ENCODE measurements at regions of chr3 and their contacts with region 1.

Region 1: GRCh38 chr3:5006755-5007202 is 27.5 kb downstream of the BHLHE40 start:
- DNase-seq: peak; percentile 95
- ATAC-seq: peak; percentile 78
- H3K4me3 ChIP-seq: 0 out of 2 replicates have a peak overlapping the region, but pooled peaks have one; percentile 26
- H3K27ac ChIP-seq: peak overlapping the region; percentile 94
- H3K4me1 ChIP-seq: peaks cover 53% of the 10 kb centered on the region
- H3K27me3 ChIP-seq: no peaks in the 10 kb centered on the region
- CTCF ChIP-seq: peak in 1 of 3 experiments; percentile 24; a peak in 2 of 6 replicates
- EP300 ChIP-seq: peak; percentile 98 to 99
- POLR2A ChIP-seq: peak; percentile 69; the same call in 1 of the 2 replicates
- RAD21 ChIP-seq: peak; percentile 30; the same call in 1 of the 2 replicates

Region 2: DNA sequence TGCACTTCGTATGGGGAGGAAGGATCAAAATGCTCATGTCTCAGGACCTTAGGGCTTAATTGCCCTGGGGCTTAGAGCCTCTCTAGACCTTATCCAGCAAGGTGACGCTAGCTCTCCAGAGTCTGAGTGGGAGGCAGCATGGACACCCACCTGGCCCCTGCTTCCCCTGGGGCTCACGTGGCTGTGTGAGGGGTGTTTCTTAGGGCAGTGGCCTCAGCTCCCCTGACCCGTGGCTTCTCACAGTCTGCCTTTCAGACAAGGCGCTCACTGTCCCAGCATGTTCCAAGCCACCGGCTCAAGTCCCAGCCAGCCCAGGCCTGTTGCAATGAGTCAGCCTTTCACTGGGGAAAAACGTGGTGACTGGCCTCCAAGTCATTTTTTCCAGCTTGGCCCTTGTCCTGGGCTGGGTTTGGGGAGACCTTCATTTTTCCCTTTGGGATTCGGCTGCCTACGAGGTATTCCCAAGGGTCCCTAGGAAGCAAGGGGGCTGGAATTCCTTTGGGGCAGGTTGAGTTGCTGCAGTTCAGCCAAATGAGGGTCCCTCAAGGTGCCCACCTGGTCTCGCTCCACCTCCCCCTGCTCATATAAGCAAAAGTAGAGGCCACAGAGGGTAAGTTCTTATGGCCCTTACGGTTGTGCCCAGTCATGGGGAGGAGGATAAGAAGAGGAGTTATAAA is 11.8 kb before region 1 on chr3:
- CTCF ChIA-PET with region 1: interaction called, 18 read pairs
- POLR2A ChIA-PET with region 1: interaction called, 37 read pairs
- RAD21 ChIA-PET with region 1: interaction called, 37 read pairs
- SMC1A ChIA-PET with region 1: interaction called, 66 read pairs
- in situ Hi-C with region 1: no loop called
- intact Hi-C with region 1: no loop called
- DNase-seq: no peak
- ATAC-seq: peak; percentile 75
- H3K4me3 ChIP-seq: no peak overlapping the region
- H3K27ac ChIP-seq: peak overlapping the region; percentile 7; the same call in 1 of the 2 replicates
- H3K4me1 ChIP-seq: peaks cover 10% of the 10 kb centered on the region
- H3K27me3 ChIP-seq: no peaks in the 10 kb centered on the region
- CTCF ChIP-seq: no peak
- EP300 ChIP-seq: no peak
- POLR2A ChIP-seq: 0 out of 2 replicates have a peak, but pooled peaks have one; percentile 31
- RAD21 ChIP-seq: no peak

Region 3: GRCh38 chr3:5041315-5041714 is 34.5 kb after region 1 on chr3:
- CTCF ChIA-PET with region 1: interaction called, 6 read pairs
- POLR2A ChIA-PET with region 1: interaction called, 3 read pairs
- RAD21 ChIA-PET with region 1: interaction called, 5 read pairs
- SMC1A ChIA-PET with region 1: interaction called, 11 read pairs
- in situ Hi-C with region 1: no loop called
- intact Hi-C with region 1: no loop called
- DNase-seq: no peak
- ATAC-seq: peak; percentile 49
- H3K4me3 ChIP-seq: no peak overlapping the region
- H3K27ac ChIP-seq: no peak overlapping the region
- H3K4me1 ChIP-seq: peaks cover 9% of the 10 kb centered on the region
- H3K27me3 ChIP-seq: no peaks in the 10 kb centered on the region
- CTCF ChIP-seq: 0 out of 6 replicates have a peak, but pooled peaks of 1 of the 3 experiments have one; percentile 18
- EP300 ChIP-seq: no peak
- POLR2A ChIP-seq: no peak
- RAD21 ChIP-seq: no peak